Mammary epithelial cell (primary cell): ENCODE measurements at regions of chr5 and their contacts with region 1.

Region 1: GRCh38 chr5:124748687-124749594 is 2.5 kb upstream of the ZNF608 start:
- DNase-seq: peak; percentile 94
- H3K4me3 ChIP-seq: peak overlapping the region; percentile 71 to 75 (median 75)
- H3K27ac ChIP-seq: peak overlapping the region; percentile 92
- H3K4me1 ChIP-seq: peaks cover 22% of the 10 kb centered on the region
- H3K27me3 ChIP-seq: no peaks in the 10 kb centered on the region
- CTCF ChIP-seq: peak in 1 of 2 donors; percentile 3

Region 2: DNA sequence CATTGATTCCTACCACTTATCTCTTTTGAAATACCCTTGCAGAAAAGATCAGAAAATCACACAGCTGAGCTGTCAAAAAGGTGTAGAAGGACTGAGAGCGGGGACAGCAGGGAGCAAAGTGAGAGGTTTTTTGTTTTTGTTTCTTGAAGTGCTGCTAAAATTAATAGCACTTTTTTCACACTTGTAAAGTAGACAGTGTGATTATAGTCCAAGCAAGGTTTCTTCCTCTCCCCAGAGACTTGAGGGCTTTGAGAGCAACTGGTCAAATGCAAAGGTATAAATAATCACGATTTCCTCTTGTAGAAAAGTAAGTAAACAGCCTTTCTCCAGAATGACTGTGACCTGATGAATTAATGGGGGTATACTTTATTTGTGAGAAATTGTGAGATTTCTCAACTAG is 329.4 kb before region 1 on chr5:
- CTCF ChIA-PET with region 1: no interaction called
- dilution Hi-C with region 1: no loop called
- in situ Hi-C with region 1: no loop called
- intact Hi-C with region 1: loop called (anchors 5 kb)
- DNase-seq: no peak
- H3K4me3 ChIP-seq: no peak overlapping the region
- H3K27ac ChIP-seq: no peak overlapping the region
- H3K4me1 ChIP-seq: no peaks in the 10 kb centered on the region
- H3K27me3 ChIP-seq: no peaks in the 10 kb centered on the region
- CTCF ChIP-seq: no peak

Region 3: DNA sequence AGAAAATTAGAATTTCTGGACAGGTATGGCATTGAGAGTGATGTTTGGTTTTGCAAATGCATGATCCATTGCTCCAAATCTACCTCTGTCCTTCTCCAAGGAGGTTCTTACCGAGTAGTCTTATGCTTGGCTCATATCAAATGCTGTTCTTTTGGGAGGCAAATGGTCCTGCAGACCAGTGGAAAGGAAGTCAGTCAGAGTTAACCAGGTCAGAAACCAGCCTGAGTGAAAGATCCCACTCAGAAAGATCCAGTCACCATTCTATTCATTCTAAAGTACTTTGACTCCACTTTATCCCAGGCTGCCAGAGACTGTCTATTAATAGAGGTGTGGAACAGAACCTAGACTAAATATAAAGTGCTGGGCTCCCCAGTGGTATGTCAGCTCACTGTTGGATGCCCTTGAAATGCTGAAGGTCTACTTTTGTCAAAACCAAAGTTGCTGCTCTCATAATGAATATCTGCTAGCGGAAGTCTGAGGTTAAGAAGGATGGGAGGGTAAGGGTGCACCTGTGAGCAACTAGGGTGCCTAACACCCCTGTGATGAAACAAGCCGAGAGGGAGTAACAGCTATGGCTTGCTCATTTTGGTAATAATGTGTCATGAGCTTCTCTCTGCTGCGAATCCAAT is 304.7 kb before region 1 on chr5:
- CTCF ChIA-PET with region 1: no interaction called
- dilution Hi-C with region 1: no loop called
- in situ Hi-C with region 1: no loop called
- intact Hi-C with region 1: no loop called
- DNase-seq: no peak
- H3K4me3 ChIP-seq: no peak overlapping the region
- H3K27ac ChIP-seq: no peak overlapping the region
- H3K4me1 ChIP-seq: no peaks in the 10 kb centered on the region
- H3K27me3 ChIP-seq: peaks cover 7% of the 10 kb centered on the region
- CTCF ChIP-seq: no peak

Region 4: DNA sequence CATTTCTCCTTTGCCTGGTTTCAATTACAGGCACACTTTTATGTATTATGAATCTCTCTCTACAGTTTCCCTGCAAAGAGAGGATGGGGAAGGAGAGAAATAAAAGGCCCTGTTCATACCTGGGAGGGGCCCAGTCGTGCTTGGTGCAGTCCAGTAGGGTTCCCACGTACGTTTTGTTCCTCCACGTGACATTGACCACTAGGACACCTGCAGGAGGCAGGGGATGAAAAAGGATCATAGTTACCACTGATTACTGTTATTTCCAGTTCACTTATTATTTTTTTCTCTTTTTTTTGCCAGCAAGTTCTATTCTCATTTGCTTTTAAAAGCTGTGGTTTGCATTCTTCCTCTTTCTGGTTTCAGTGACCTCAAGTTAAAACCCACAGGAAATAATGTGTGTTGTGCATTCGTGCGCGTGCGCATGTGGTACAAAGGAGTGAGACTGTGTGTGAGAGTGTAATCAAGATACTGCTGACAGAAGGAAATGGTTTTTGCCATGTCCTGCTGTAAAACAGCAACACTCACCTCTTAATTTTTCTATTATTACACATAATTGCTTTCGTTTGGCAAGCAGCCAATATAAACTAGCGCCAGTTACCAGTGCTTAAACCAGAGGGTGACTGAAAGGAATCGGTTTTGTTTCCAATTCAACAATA is 99.3 kb before region 1 on chr5:
- CTCF ChIA-PET with region 1: no interaction called
- dilution Hi-C with region 1: loop called (anchors 5 kb)
- in situ Hi-C with region 1: loop called in 1 of 2 experiments (anchors 10 kb)
- intact Hi-C with region 1: no loop called
- DNase-seq: peak; percentile 90
- H3K4me3 ChIP-seq: no peak overlapping the region
- H3K27ac ChIP-seq: peak overlapping the region; percentile 56
- H3K4me1 ChIP-seq: peaks cover 55% of the 10 kb centered on the region
- H3K27me3 ChIP-seq: no peaks in the 10 kb centered on the region
- CTCF ChIP-seq: no peak

Region 5: GRCh38 chr5:124952079-124952478 is 203.1 kb after region 1 on chr5:
- CTCF ChIA-PET with region 1: no interaction called
- dilution Hi-C with region 1: no loop called
- in situ Hi-C with region 1: no loop called
- intact Hi-C with region 1: no loop called
- DNase-seq: no peak
- H3K4me3 ChIP-seq: no peak overlapping the region
- H3K27ac ChIP-seq: no peak overlapping the region
- H3K4me1 ChIP-seq: peaks cover 18% of the 10 kb centered on the region
- H3K27me3 ChIP-seq: no peaks in the 10 kb centered on the region
- CTCF ChIP-seq: no peak

Region 6: DNA sequence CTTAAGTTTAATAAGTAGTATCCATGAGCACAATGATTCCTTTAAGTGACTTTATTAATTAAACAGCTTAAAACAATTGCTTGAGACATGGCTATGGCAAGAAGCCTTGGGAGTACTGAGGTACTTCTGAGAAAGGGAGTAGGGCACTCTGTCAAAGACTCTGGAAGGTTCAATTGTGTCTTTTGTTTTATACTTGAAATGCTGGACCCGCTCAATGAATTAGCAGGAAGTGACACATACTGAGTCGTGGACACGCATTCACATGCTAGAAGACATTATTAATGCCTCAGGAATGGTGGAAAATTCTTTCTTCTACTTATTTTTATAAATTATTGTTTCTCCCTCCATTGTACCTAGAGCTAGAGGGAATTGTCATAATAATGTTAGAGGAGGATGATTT is 344.8 kb after region 1 on chr5:
- CTCF ChIA-PET with region 1: interaction called, 5 read pairs
- dilution Hi-C with region 1: no loop called
- in situ Hi-C with region 1: no loop called
- intact Hi-C with region 1: loop called (anchors 10 kb)
- DNase-seq: peak; percentile 85
- H3K4me3 ChIP-seq: no peak overlapping the region
- H3K27ac ChIP-seq: peak overlapping the region; percentile 73
- H3K4me1 ChIP-seq: peaks cover 19% of the 10 kb centered on the region
- H3K27me3 ChIP-seq: no peaks in the 10 kb centered on the region
- CTCF ChIP-seq: no peak

Region 7: DNA sequence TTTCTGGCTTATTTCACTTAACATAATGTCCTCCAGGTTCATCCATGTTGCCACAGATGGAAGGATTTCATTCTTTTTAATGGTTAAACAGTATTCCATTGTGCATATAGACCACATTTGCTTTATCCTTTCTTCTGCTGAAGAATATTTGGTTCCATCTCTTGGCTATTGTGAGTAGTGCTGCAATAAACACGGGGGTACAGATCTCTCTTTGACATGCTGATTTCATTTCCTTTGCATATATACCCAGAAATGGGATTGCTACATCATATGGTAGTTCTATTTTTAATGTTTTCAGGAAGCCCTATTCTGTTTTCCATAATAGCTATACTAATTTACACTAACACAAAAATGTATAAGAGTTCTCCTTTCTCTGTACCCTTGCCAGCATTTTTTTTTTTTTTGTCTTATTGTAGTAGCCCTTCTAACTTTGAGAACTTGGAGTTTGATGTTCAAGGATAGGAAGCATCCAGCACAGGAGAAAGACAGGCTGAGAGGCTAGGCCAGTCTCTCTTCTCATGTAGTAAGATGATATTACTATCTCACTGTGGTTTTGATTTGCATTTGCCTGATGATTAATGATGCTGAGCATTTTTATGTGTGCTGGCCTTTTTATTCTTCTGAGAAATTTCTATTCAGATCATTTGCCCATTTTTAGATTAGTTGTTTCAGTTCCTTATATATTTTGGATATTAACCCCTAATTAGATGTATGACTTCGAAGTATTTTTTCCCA is 589.7 kb after region 1 on chr5:
- CTCF ChIA-PET with region 1: no interaction called
- dilution Hi-C with region 1: no loop called
- in situ Hi-C with region 1: no loop called
- intact Hi-C with region 1: loop called (anchors 10 kb)
- DNase-seq: no peak
- H3K4me3 ChIP-seq: no peak overlapping the region
- H3K27ac ChIP-seq: no peak overlapping the region
- H3K4me1 ChIP-seq: no peaks in the 10 kb centered on the region
- H3K27me3 ChIP-seq: no peaks in the 10 kb centered on the region
- CTCF ChIP-seq: no peak

Region 8: GRCh38 chr5:125756456-125756855 is 1007.5 kb after region 1 on chr5:
- CTCF ChIA-PET with region 1: no interaction called
- dilution Hi-C with region 1: no loop called
- in situ Hi-C with region 1: no loop called
- intact Hi-C with region 1: loop called (anchors 10 kb)
- DNase-seq: no peak
- H3K4me3 ChIP-seq: no peak overlapping the region
- H3K27ac ChIP-seq: no peak overlapping the region
- H3K4me1 ChIP-seq: no peaks in the 10 kb centered on the region
- H3K27me3 ChIP-seq: no peaks in the 10 kb centered on the region
- CTCF ChIP-seq: no peak